ENCODE measurements at regions of chr6 and their contacts with region 1.

Region 1: GRCh38 chr6:30130887-30131862 is 4.8 kb upstream of the TRIM40 start:
- DNase-seq: peak; percentile 64
- H3K4me3 ChIP-seq: no peak overlapping the region
- H3K27ac ChIP-seq: no peak overlapping the region
- H3K27me3 ChIP-seq: peaks cover 45% of the 10 kb centered on the region
- CTCF ChIP-seq: peak; percentile 99

Region 2: DNA sequence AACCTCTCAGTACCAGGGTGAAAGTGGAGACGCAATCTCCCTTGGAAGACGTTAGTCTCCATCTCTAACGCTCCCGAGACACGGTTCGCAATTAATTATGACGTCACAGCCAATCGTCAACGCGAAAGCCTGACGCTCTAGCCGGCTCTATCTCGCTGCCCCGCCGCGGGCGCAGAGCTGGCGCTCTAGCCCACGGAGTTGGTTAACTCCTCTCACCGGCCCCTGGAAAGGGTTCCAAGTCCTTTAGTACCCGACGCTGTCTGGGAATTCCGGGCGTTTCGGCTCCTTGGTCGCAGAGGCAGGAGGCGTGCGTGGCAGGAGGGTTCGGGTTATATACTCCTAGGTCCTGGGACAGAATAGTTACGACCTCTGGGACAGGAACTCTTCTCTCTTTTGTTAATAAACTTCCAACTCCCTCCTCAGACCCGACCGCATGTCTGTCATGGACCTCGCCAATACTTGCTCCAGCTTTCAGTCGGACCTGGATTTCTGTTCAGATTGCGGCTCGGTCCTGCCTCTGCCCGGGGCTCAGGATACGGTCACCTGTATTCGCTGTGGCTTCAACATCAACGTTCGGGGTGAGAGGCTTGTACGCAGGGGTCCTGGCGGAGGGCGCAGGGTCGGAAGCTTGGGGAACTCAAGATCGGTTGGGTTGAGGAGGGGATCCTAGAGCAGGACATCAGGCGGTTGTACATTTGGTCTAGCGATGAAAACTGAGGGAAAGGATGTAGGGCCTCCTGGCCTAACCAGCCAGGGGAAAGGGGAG is 69.9 kb before region 1 on chr6 and contains the start of gene POLR1H:
- CTCF ChIA-PET with region 1: interaction called, 14 read pairs
- POLR2A ChIA-PET with region 1: no interaction called
- DNase-seq: peak; percentile 85
- H3K4me3 ChIP-seq: peak within 1 kb of the TSS; percentile 96
- H3K27ac ChIP-seq: peak within 1 kb of the TSS; percentile 78
- H3K27me3 ChIP-seq: no peaks in the 10 kb centered on the region
- CTCF ChIP-seq: no peak
- polyA plus RNA-seq, gene POLR1H: 25.0 and 25.1 TPM in 2 replicates

Region 3: DNA sequence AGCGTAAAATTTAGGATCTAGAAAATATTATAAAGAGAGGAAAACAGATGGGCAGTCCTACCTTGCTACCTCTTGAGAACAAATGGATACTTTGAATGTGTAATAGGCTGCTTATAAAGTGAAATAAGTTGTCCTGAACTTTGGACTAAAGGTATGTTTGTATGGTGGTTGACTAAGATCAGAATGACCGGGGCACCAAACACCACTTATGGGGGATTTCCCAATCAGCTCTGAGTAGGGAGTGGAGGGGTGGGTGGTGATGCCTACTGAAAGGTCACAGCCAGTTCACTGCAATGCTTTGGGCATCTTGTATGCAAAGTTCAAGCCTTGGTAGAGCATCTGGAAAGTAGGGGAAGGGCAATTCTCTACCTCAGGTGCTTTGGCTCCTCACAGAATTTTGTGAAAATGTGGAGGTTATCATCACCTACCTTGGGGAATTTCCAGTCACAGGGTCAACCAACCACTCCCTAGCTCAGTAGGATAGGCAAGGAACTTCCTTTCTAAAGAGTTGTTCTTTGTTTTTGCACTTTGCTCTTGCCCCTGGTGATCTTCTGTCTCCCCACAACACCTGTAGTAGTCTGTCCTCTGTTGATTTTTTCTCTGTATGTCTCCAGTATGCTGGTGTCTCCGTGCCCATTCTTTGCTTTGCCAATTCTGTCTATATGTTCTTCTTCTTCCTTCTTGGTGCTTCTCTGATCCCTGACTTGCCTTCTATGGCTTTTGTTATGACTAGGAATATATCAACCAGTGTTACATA is 18.0 kb before region 1 on chr6 and contains the start of gene TRIM31:
- CTCF ChIA-PET with region 1: interaction called, 27 read pairs
- POLR2A ChIA-PET with region 1: no interaction called
- DNase-seq: no peak
- H3K4me3 ChIP-seq: no peak within 1 kb of the TSS
- H3K27ac ChIP-seq: no peak within 1 kb of the TSS
- H3K27me3 ChIP-seq: peaks cover 26% of the 10 kb centered on the region
- CTCF ChIP-seq: no peak
- polyA plus RNA-seq, gene TRIM31: not detected in 2 replicates

Region 4: GRCh38 chr6:30149231-30149630 is 18.1 kb after region 1 on chr6:
- CTCF ChIA-PET with region 1: interaction called, 40 read pairs
- POLR2A ChIA-PET with region 1: no interaction called
- DNase-seq: no peak
- H3K4me3 ChIP-seq: no peak overlapping the region
- H3K27ac ChIP-seq: no peak overlapping the region
- H3K27me3 ChIP-seq: peaks cover 20% of the 10 kb centered on the region
- CTCF ChIP-seq: no peak

Measured in AG04450 (cell line).